Adrenal gland (tissue), 19 donors: ENCODE measurements at regions of chr2 and their contacts with region 1.

Region 1: DNA sequence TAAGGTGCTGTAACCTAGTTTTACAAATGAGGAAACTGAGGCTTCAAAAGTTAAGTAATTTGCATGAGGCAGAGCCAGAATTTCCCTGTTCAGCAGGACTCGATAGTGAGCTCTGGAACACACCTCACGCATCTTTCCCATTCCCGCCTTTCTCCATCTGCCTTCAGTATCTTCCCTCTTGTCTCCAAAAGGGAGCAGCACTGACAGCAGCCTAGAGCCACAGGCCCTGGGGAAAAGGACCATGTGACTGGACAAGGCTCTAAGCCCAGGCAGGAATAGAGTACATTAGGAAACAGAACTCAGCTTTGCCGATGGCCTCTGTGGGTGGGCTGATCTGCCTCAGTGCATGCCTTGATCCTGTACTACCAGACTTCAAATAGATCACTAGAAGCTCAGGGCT is 21.5 kb downstream of the GPR155 start:
- DNase-seq: peak in 1 of 7 donors; percentile 5
- H3K4me3 ChIP-seq: no peak overlapping the region
- H3K27ac ChIP-seq: no peak overlapping the region
- H3K4me1 ChIP-seq: no peaks in the 10 kb centered on the region
- H3K27me3 ChIP-seq: no peaks in the 10 kb centered on the region
- CTCF ChIP-seq: no peak
- POLR2A ChIP-seq: no peak

Region 2: GRCh38 chr2:174400853-174401252 is 64.5 kb before region 1 on chr2:
- intact Hi-C with region 1: no loop called
- DNase-seq: no peak
- H3K4me3 ChIP-seq: no peak overlapping the region
- H3K27ac ChIP-seq: no peak overlapping the region
- H3K4me1 ChIP-seq: peaks cover 7 to 15% of the 10 kb centered on the region in 2 donors
- H3K27me3 ChIP-seq: no peaks in the 10 kb centered on the region
- CTCF ChIP-seq: no peak
- POLR2A ChIP-seq: no peak

Region 3: DNA sequence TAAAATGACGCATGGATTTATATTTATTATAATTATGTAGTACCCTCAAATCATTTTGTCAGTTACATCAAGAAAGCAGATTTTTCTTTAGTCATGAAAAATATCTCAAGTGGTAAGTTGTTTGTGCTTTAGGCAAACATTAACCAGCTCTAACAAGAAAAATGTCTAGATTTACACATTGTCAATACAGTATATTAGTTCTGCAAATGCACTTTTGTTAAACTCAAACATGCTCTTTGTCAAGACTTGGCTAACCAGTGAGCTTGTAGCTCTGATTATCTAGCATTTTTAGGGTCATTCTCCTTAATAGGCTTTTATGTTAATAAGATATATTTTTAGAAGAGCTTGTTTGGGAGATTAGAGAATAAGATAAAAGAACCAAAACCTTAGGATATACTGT is 37.1 kb before region 1 on chr2:
- intact Hi-C with region 1: no loop called
- DNase-seq: no peak
- H3K4me3 ChIP-seq: no peak overlapping the region
- H3K27ac ChIP-seq: no peak overlapping the region
- H3K4me1 ChIP-seq: no peaks in the 10 kb centered on the region
- H3K27me3 ChIP-seq: no peaks in the 10 kb centered on the region
- CTCF ChIP-seq: no peak
- POLR2A ChIP-seq: no peak

Region 4: DNA sequence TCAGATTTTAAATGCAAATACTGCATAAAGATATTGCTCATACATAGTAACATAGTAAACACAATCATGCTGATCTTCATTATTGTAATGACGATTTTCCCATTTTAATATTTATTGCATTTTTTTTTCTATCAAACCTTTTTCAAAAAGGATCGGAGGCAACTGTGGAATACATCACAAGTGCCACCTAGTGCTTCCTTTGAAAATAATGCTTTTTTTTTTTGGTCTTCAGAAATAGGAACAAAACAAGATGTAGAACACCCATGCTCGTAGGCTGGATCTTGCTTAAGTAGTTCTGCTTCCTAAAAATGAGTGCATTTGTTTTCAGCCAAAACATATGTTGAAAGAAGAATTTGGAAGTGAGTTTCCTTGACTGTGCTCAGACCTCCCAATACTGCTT is 57.2 kb after region 1 on chr2:
- intact Hi-C with region 1: loop called in 1 of 2 experiments (anchors 2 kb)
- DNase-seq: no peak
- H3K4me3 ChIP-seq: no peak overlapping the region
- H3K27ac ChIP-seq: no peak overlapping the region
- H3K4me1 ChIP-seq: no peaks in the 10 kb centered on the region
- H3K27me3 ChIP-seq: no peaks in the 10 kb centered on the region
- CTCF ChIP-seq: peak in 5 of 6 experiments; percentile 33 to 56 (median 49)
- POLR2A ChIP-seq: no peak

Region 5: GRCh38 chr2:174697255-174697654 is 231.9 kb after region 1 on chr2:
- intact Hi-C with region 1: loop called in 1 of 2 experiments (anchors 10 kb)
- DNase-seq: peak; percentile 39 to 81 (median 65)
- H3K4me3 ChIP-seq: no peak overlapping the region
- H3K27ac ChIP-seq: no peak overlapping the region
- H3K4me1 ChIP-seq: no peaks in the 10 kb centered on the region
- H3K27me3 ChIP-seq: no peaks in the 10 kb centered on the region
- CTCF ChIP-seq: peak; percentile 54 to 71 (median 64)
- POLR2A ChIP-seq: no peak

Region 6: GRCh38 chr2:175662335-175662734 is 1197.0 kb after region 1 on chr2:
- intact Hi-C with region 1: no loop called
- DNase-seq: no peak
- H3K4me3 ChIP-seq: no peak overlapping the region
- H3K27ac ChIP-seq: no peak overlapping the region
- H3K4me1 ChIP-seq: no peaks in the 10 kb centered on the region
- H3K27me3 ChIP-seq: no peaks in the 10 kb centered on the region
- CTCF ChIP-seq: no peak
- POLR2A ChIP-seq: no peak